AG04450 (cell line): ENCODE measurements at regions of chr9 and their contacts with region 1.

Region 1: DNA sequence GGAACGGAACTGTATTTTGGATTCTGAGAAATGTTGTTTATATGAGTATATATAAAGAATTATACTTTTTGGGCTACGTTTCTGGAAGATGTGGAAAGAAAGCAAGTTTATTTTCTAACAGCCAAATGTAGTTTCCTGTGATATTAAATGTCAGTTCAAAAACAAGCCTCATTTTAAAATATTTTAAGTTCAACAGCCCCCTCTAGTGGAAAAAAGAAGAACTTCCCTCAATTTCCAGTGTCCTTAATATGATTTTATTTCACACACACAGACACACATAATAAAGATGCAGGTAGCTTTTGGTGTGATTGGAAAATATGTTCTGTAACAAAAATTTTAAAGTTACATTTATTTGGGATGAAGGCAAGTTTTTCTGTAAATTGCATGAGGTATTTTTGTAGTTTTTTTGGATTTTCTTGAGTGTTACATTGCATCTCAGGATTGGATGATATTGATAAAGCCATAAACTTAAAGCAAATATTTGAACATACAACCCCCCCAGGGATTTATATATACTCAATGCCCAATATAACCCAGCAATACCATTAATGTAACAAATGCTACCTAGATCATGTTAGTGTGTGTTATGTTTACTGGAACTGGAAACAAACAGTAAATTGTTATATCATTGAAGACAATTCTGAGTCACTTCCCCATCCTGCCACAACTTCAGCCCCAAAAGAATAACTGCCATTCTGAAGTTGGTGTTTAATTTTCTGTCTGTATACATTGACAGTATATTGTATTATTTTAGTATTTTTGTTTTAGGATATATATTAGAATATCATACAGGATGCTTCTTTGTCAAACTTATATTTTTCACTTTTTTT is 54.0 kb downstream of the CCDC171 start:
- DNase-seq: peak; percentile 3
- H3K4me3 ChIP-seq: no peak overlapping the region
- H3K27ac ChIP-seq: no peak overlapping the region
- H3K27me3 ChIP-seq: no peaks in the 10 kb centered on the region
- CTCF ChIP-seq: peak; percentile 61

Region 2: DNA sequence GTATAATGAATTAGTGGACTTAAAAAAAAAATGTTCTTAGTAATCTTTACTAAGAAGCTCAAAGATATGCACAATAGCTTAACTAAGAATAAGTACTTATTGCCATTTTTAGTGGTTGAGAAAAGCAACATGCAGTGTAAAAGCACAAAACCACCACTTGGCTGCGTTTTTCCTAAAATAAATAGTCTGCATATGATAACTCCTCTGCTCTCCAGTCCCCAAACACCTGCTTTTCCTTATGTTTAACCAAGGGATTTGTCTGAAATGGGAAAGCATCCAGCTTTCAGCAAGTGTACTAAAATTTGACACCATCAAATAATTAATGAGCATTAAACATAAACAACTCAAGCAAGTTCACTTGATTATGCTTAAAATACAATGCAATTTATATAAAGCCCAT is 137.5 kb before region 1 on chr9:
- CTCF ChIA-PET with region 1: interaction called, 13 read pairs
- POLR2A ChIA-PET with region 1: no interaction called
- DNase-seq: no peak
- H3K4me3 ChIP-seq: no peak overlapping the region
- H3K27ac ChIP-seq: no peak overlapping the region
- H3K27me3 ChIP-seq: no peaks in the 10 kb centered on the region
- CTCF ChIP-seq: peak; percentile 27; the same call in 1 of the 2 replicates

Region 3: DNA sequence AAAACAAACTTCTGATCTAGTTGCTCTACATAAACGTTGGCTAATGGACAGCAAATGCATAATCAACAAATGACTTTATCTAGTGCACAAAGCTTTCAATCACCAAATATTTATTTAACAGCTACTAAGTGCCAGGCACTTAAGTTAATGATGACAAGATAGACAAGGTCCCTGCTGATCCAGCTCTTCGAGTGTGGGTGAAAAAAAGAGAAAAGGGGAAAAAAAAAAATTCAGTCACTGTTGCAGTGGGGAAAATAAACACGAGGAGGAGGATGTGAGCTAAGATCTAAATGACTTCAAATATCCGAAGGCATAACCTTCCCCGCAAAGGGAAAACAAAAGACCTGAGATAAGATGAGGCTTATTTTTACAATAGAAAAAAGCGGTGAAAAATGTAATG is 105.7 kb before region 1 on chr9:
- CTCF ChIA-PET with region 1: interaction called, 17 read pairs
- POLR2A ChIA-PET with region 1: no interaction called
- DNase-seq: no peak
- H3K4me3 ChIP-seq: no peak overlapping the region
- H3K27ac ChIP-seq: no peak overlapping the region
- H3K27me3 ChIP-seq: no peaks in the 10 kb centered on the region
- CTCF ChIP-seq: peak; percentile 33